Activated CD4-positive, alpha-beta memory T cell treated with anti-CD3 and anti-CD28 coated beads for 36 hours (primary cell): ENCODE measurements at regions of chr9 and their contacts with region 1.

Region 1: DNA sequence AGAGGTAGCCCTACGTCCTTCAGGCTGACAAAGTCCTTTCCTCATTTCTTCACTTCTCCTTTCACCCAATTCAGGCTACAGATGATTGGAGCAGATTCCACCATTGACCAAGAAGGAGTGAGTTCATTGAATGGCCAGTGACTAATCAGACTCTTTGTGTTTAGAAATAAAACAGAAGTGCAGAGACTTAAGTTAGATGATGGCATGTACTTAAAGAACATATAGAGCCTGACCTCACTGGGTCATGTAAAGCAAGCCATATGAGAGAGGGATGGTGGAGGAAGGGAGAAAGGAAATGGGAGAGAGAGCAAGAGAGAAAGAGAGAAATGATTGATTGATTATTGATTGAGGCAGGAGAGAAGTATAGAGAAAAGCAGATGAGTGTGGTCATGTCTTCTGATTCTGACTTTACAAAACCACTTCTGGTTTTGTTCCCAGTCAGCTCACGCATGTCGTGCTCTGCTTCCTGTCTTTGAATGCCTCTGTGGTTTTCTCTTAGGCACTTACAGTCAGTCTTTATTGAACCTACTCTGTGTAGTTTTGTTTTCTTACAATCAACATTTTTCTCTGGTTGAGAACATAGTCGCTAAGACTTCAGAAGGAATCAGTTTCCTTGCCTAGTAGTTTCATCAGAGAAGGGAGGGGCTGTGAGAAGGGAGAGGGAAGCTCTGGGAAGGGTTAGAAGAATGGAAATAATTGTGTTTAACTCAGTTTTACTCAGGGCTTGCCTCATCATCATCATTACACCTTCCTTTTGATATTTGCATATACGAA is 149.2 kb upstream of the KLF9 start:
- DNase-seq: peak; percentile 81
- H3K4me3 Mint-ChIP-seq: peak overlapping the region; percentile 38
- H3K27ac Mint-ChIP-seq: peak overlapping the region; percentile 88
- H3K4me1 Mint-ChIP-seq: peaks cover 47% of the 10 kb centered on the region
- H3K27me3 Mint-ChIP-seq: no peaks in the 10 kb centered on the region

Region 2: GRCh38 chr9:69174616-69175463 is 1388.8 kb before region 1 on chr9:
- CTCF ChIA-PET with region 1: no interaction called
- POLR2A ChIA-PET with region 1: no interaction called
- intact Hi-C with region 1: loop called (anchors 10 kb)
- DNase-seq: peak; percentile 83
- H3K4me3 Mint-ChIP-seq: peak overlapping the region; percentile 82
- H3K27ac Mint-ChIP-seq: peak overlapping the region; percentile 71
- H3K4me1 Mint-ChIP-seq: peaks cover 54% of the 10 kb centered on the region
- H3K27me3 Mint-ChIP-seq: peaks cover 36% of the 10 kb centered on the region

Region 3: GRCh38 chr9:70419546-70420266 is 143.9 kb before region 1 on chr9:
- CTCF ChIA-PET with region 1: interaction called, 3 read pairs
- POLR2A ChIA-PET with region 1: interaction called, 34 read pairs
- intact Hi-C with region 1: loop called (anchors 1 kb)
- DNase-seq: peak; percentile 94
- H3K4me3 Mint-ChIP-seq: peak overlapping the region; percentile 92
- H3K27ac Mint-ChIP-seq: peak overlapping the region; percentile 99
- H3K4me1 Mint-ChIP-seq: peaks cover 39% of the 10 kb centered on the region
- H3K27me3 Mint-ChIP-seq: no peaks in the 10 kb centered on the region

Region 4: GRCh38 chr9:70519912-70520724 is 43.5 kb before region 1 on chr9:
- CTCF ChIA-PET with region 1: no interaction called
- POLR2A ChIA-PET with region 1: interaction called, 17 read pairs
- intact Hi-C with region 1: loop called (anchors 1 kb)
- DNase-seq: peak; percentile 31
- H3K4me3 Mint-ChIP-seq: peak overlapping the region; percentile 58
- H3K27ac Mint-ChIP-seq: peak overlapping the region; percentile 88
- H3K4me1 Mint-ChIP-seq: peaks cover 30% of the 10 kb centered on the region
- H3K27me3 Mint-ChIP-seq: peaks cover 1% of the 10 kb centered on the region

Region 5: GRCh38 chr9:70577671-70578070 is 14.1 kb after region 1 on chr9:
- CTCF ChIA-PET with region 1: no interaction called
- POLR2A ChIA-PET with region 1: no interaction called
- intact Hi-C with region 1: loop called (anchors 1 kb)
- DNase-seq: no peak
- H3K4me3 Mint-ChIP-seq: no peak overlapping the region
- H3K27ac Mint-ChIP-seq: no peak overlapping the region
- H3K4me1 Mint-ChIP-seq: peaks cover 11% of the 10 kb centered on the region
- H3K27me3 Mint-ChIP-seq: no peaks in the 10 kb centered on the region

Region 6: GRCh38 chr9:70868661-70869652 is 305.3 kb after region 1 on chr9:
- CTCF ChIA-PET with region 1: no interaction called
- POLR2A ChIA-PET with region 1: no interaction called
- intact Hi-C with region 1: no loop called
- DNase-seq: no peak
- H3K4me3 Mint-ChIP-seq: no peak overlapping the region
- H3K27ac Mint-ChIP-seq: no peak overlapping the region
- H3K4me1 Mint-ChIP-seq: no peaks in the 10 kb centered on the region
- H3K27me3 Mint-ChIP-seq: no peaks in the 10 kb centered on the region